GM12878 (cell line): ENCODE measurements at regions of chr1 and their contacts with region 1.

Region 1: GRCh38 chr1:237358555-237358954 is 316.6 kb downstream of the RYR2 start:
- DNase-seq: no peak
- ATAC-seq: no peak
- H3K4me3 ChIP-seq: no peak overlapping the region
- H3K27ac ChIP-seq: no peak overlapping the region
- H3K4me1 ChIP-seq: no peaks in the 10 kb centered on the region
- H3K27me3 ChIP-seq: no peaks in the 10 kb centered on the region
- CTCF ChIP-seq: no peak
- EP300 ChIP-seq: no peak
- POLR2A ChIP-seq: no peak
- RAD21 ChIP-seq: no peak

Region 2: DNA sequence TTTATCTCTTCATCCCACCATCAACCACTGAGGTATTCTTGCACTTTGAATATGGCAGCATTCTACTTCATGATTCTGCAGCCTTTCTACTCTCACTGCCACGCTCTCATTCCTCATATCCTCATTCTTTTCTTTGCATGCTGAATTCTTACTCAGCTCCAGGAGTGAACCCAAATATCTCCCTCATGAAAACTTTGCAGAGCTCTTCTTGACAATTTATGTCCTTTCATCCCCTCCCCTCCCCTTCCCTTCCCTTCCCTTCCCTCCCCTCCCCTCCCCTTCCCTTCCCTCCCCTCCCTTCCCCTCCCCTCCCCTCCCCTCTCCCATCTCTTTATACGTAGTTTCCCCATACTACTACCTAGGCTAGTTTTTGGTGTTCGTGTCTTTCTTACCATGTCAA is 47.4 kb after region 1 on chr1:
- CTCF ChIA-PET with region 1: no interaction called
- POLR2A ChIA-PET with region 1: no interaction called
- RAD21 ChIA-PET with region 1: no interaction called
- SMC1A ChIA-PET with region 1: no interaction called
- in situ Hi-C with region 1: no loop called
- intact Hi-C with region 1: loop called (anchors 5 kb)
- DNase-seq: no peak
- ATAC-seq: no peak
- H3K4me3 ChIP-seq: no peak overlapping the region
- H3K27ac ChIP-seq: no peak overlapping the region
- H3K4me1 ChIP-seq: no peaks in the 10 kb centered on the region
- H3K27me3 ChIP-seq: no peaks in the 10 kb centered on the region
- CTCF ChIP-seq: no peak
- EP300 ChIP-seq: no peak
- POLR2A ChIP-seq: no peak
- RAD21 ChIP-seq: no peak